Heart right ventricle (tissue), 16 donors: ENCODE measurements at regions of chr14 and their contacts with region 1.

Region 1: GRCh38 chr14:59189786-59190771 is 1.6 kb downstream of the DAAM1 start:
- DNase-seq: peak; percentile 78 to 84
- ATAC-seq: peak in 7 of 8 donors; percentile 23 to 54 (median 35)
- H3K4me3 ChIP-seq: peak overlapping the region; percentile 76 to 97 (median 86)
- H3K27ac ChIP-seq: peak overlapping the region; percentile 88 to 96 (median 92)
- H3K4me1 ChIP-seq: peaks cover 16 to 60% (median 48%) of the 10 kb centered on the region in 9 donors
- H3K27me3 ChIP-seq: no peaks in the 10 kb centered on the region
- CTCF ChIP-seq: peak in 3 of 9 donors; percentile 15 to 35 (median 23)

Region 2: DNA sequence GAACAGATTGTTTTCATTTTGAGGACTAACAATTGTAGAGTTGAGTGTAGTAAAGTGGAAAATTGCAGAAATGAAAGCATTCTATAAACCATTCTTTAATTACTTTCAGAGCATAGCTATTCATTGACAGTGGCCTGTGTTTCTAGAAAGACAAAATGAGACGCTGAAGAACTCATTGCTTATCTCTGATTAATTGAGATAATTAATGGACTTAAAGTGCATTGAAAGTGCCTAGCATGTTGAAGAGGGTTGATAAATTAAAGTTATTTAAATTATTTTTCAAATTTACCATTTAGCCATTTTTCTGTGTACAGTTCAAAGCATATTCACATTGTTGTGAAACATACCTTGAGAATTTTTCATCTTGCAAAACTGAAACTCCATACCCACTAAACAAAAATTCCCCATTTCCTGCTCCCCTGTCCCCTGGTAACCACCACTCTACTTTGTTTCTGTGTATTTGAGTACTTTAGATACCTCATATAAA is 55.8 kb after region 1 on chr14:
- intact Hi-C with region 1: loop called in 4 of 10 experiments (anchors 5 to 10 kb)
- DNase-seq: no peak
- ATAC-seq: no peak
- H3K4me3 ChIP-seq: no peak overlapping the region
- H3K27ac ChIP-seq: no peak overlapping the region
- H3K4me1 ChIP-seq: peaks cover 0 to 80% (median 29%) of the 10 kb centered on the region in 9 donors
- H3K27me3 ChIP-seq: no peaks in the 10 kb centered on the region
- CTCF ChIP-seq: no peak

Region 3: DNA sequence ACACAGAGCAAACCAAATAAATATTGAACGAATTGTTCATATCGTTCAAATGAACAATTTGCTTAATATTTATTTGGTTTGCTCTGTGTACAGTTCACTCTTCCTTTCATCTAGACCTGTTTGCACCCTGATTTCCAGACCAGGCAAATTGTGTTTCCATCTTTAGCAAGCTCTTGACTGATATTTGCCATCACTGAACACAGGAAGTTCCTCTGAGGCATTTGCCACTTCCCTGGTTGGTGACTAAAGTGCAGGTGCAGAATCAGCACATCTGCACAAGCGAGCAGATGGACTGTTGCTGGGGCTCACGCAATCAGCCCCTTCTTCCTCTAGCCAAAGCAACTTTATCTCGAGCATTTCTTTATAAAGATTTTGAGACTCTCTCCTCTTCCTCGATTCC is 111.3 kb after region 1 on chr14:
- intact Hi-C with region 1: loop called in 2 of 10 experiments (anchors 10 kb)
- DNase-seq: no peak
- ATAC-seq: peak in 6 of 8 donors; percentile 48 to 63 (median 52)
- H3K4me3 ChIP-seq: no peak overlapping the region
- H3K27ac ChIP-seq: peak overlapping the region in 3 of 10 donors; percentile 8 to 12 (median 11)
- H3K4me1 ChIP-seq: peaks cover 3 to 84% (median 53%) of the 10 kb centered on the region in 9 donors
- H3K27me3 ChIP-seq: no peaks in the 10 kb centered on the region
- CTCF ChIP-seq: no peak

Region 4: GRCh38 chr14:59333668-59334067 is 143.6 kb after region 1 on chr14:
- intact Hi-C with region 1: loop called in 5 of 10 experiments (anchors 2 to 5 kb)
- DNase-seq: peak in 1 of 2 donors; percentile 66
- ATAC-seq: peak; percentile 84 to 95 (median 92)
- H3K4me3 ChIP-seq: no peak overlapping the region
- H3K27ac ChIP-seq: peak overlapping the region; percentile 57 to 89 (median 86)
- H3K4me1 ChIP-seq: peaks cover 21 to 79% (median 71%) of the 10 kb centered on the region in 9 donors
- H3K27me3 ChIP-seq: no peaks in the 10 kb centered on the region
- CTCF ChIP-seq: no peak

Region 5: DNA sequence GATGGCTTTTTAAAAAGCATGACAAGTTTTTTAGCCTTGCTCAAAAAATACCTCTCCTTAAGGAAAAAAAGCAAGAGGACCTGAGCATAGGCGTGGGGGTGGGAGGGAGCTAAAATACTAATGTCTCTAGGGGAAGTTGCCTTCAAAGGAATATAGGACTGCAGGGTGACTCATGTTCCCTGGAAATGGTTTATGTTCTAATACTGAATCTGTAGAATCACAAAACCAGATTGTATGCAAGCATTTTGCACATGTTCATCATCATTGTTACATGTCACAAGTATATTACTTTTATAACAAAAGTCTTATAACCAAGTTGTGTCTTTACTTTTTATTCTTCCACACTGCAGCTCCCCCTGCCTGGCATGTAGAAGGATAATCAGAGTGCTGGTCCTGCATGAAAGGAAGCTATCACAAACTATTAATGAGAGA is 238.5 kb after region 1 on chr14:
- intact Hi-C with region 1: loop called in 5 of 10 experiments (anchors 5 to 10 kb)
- DNase-seq: no peak
- ATAC-seq: peak in 6 of 8 donors; percentile 21 to 48 (median 35)
- H3K4me3 ChIP-seq: no peak overlapping the region
- H3K27ac ChIP-seq: peak overlapping the region in 9 of 10 donors; percentile 17 to 74 (median 68)
- H3K4me1 ChIP-seq: peaks cover 0 to 63% (median 43%) of the 10 kb centered on the region in 9 donors
- H3K27me3 ChIP-seq: no peaks in the 10 kb centered on the region
- CTCF ChIP-seq: peak in 7 of 9 donors; percentile 30 to 66 (median 46)